Right ventricle myocardium inferior (tissue), 1 donor: ENCODE measurements at regions of chr7 and their contacts with region 1.

Region 1: GRCh38 chr7:142098004-142098403 is 13.5 kb upstream of the MGAM2 start:
- DNase-seq: no peak
- ATAC-seq: no peak

Region 2: DNA sequence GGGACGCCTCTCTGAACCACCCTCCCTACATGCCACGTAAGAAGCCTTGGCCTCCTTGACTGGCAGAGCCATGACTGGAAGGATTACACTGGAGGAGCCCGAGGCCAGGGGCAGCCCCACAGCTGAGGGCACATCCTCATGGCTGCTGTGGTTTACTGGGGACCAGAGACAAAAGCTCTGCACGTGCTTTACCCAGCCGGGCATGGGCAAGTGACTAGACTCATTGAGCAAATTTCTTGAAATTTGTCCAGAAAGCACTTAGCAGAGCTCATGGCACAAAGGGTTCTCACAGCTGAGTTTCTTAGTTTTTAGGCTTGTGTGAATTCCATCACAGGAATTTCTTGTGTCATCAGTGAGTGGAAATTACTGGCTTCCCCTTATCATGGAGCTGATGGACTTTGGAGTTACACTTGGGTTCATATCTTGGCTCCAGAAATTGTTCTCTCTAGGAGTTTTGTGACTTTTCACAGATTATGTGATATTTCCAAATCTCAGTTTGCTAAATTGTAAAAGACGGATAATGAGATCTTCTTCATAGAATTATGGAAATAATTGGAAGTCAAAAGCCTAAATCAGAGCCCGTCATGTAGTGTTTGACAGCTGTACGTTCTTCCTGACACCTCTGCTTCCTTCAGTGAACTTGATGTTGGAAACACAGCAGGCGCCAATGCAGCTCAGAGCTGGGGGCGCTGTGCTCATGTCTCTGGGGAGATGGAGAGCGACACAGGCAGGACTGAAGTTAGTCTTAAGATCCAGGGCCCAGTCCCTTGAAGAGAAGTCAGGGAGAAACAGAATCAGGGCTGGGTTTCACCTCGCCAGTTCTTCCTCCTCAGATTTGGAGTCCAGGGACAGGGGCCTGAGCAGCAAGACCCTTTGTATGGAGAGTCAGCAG is 34.2 kb before region 1 on chr7:
- intact Hi-C with region 1: loop called (anchors 2 kb)
- DNase-seq: no peak
- ATAC-seq: no peak